ENCODE measurements at regions of chr2 and their contacts with region 1.

Region 1: DNA sequence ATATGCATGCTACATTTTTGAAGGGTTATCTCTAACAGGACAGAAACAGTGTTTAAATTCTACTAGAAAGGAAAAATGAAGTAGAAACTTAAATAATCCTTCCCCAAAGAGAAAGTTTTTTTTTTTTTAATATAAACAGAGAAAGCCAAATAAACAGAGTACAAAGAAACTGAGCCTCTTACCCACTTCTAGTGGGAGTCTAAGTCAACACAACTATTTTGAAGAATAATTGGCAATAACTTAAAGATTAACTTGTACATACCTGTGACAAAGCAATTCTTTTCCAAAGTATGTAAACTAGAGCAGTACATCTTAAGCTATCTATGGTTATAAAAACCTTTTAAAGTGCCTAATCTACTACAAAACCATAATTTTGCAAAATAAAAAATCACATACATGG is 224.7 kb downstream of the KCNH7 start:
- DNase-seq: no peak
- ATAC-seq: no peak
- H3K4me3 ChIP-seq: no peak overlapping the region
- H3K4me3 Mint-ChIP-seq: no peak overlapping the region
- H3K27ac ChIP-seq: no peak overlapping the region
- H3K27ac Mint-ChIP-seq: no peak overlapping the region
- H3K4me1 ChIP-seq: no peaks in the 10 kb centered on the region
- H3K4me1 Mint-ChIP-seq: no peaks in the 10 kb centered on the region
- H3K27me3 ChIP-seq: no peaks in the 10 kb centered on the region
- H3K27me3 Mint-ChIP-seq: no peaks in the 10 kb centered on the region
- CTCF ChIP-seq: no peak

Region 2: DNA sequence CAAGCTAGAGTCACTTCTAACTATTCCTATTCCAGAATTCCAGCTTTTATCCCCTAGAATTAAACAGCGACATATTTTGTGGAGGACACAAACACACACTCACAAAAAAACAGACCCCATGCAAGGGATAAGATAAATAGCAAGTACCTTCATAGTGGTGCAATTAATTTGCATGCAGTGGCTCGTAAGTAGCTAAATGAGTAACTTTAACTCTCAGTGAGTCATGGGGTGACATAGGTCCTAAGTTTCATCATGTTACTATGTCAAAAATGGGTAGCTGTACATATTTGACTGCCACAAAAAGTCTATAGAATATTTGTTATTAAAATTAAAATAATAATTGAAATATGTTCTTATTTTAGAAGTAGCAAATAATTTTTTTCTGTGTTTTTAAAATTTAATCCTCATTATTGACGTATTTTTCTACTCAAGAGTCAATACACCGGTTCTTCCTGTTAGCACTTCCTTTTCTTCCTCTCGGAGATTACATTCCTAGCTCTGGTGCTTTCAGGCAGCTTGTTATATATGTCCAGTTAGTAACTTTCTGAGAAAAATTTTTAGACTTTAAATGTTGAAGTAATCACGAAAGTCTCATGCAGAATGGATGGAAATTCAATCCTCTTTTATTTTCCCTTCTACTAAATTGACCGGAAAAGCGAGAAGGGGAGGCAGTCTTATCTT is 22.3 kb before region 1 on chr2:
- CTCF ChIA-PET with region 1: no interaction called
- POLR2A ChIA-PET with region 1: no interaction called
- intact Hi-C with region 1: loop called in 1 of 2 experiments (anchors 2 kb)
- DNase-seq: no peak
- ATAC-seq: no peak
- H3K4me3 ChIP-seq: no peak overlapping the region
- H3K4me3 Mint-ChIP-seq: no peak overlapping the region
- H3K27ac ChIP-seq: no peak overlapping the region
- H3K27ac Mint-ChIP-seq: no peak overlapping the region
- H3K4me1 ChIP-seq: no peaks in the 10 kb centered on the region
- H3K4me1 Mint-ChIP-seq: no peaks in the 10 kb centered on the region
- H3K27me3 ChIP-seq: no peaks in the 10 kb centered on the region
- H3K27me3 Mint-ChIP-seq: no peaks in the 10 kb centered on the region
- CTCF ChIP-seq: no peak

Region 3: DNA sequence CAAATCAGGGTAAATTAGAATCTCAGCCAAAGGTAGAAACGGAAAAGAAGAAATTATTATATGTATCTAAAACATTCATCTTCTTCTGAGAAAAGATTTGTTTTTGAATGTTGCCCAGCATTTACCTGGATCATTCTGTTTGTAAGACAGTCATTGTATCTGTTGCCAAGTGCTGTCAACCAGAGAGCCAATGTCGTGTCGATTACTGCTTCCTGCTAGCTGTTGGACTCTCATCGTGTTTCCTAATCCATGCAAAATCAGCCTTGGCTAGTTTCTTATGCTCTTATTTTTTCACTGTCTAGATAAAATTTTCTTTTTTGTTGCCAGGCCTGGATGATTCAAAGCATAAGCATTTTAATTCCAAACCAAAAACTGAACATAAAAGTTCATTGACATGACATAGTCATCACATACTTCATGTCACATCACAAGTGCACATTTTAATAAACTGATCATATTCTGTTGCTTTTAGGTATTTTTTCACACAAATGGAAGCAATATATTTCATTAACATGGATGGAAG is 22.4 kb after region 1 on chr2:
- CTCF ChIA-PET with region 1: no interaction called
- POLR2A ChIA-PET with region 1: no interaction called
- intact Hi-C with region 1: no loop called
- DNase-seq: no peak
- ATAC-seq: no peak
- H3K4me3 ChIP-seq: no peak overlapping the region
- H3K4me3 Mint-ChIP-seq: no peak overlapping the region
- H3K27ac ChIP-seq: no peak overlapping the region
- H3K27ac Mint-ChIP-seq: no peak overlapping the region
- H3K4me1 ChIP-seq: no peaks in the 10 kb centered on the region
- H3K4me1 Mint-ChIP-seq: no peaks in the 10 kb centered on the region
- H3K27me3 ChIP-seq: no peaks in the 10 kb centered on the region
- H3K27me3 Mint-ChIP-seq: no peaks in the 10 kb centered on the region
- CTCF ChIP-seq: no peak

Region 4: DNA sequence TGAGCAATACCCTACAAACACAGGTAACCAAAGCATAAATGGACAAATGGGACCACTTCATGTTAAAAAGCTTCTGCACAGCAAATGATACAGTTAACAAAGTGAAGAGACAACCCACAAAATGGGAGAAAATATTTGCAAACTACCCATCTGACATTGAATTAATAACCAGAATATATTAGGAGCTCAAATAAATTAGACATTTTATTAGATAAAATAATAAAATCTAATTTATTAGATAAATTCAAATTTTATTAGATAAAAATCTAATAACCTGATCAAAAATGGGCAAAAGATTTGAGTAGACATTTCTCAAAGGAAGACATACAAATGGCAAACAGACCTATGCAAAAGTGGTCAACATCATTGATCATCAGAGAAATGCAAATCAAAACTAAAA is 260.6 kb after region 1 on chr2:
- CTCF ChIA-PET with region 1: no interaction called
- POLR2A ChIA-PET with region 1: no interaction called
- intact Hi-C with region 1: no loop called
- DNase-seq: no peak
- ATAC-seq: no peak
- H3K4me3 ChIP-seq: no peak overlapping the region
- H3K4me3 Mint-ChIP-seq: no peak overlapping the region
- H3K27ac ChIP-seq: no peak overlapping the region
- H3K27ac Mint-ChIP-seq: no peak overlapping the region
- H3K4me1 ChIP-seq: no peaks in the 10 kb centered on the region
- H3K4me1 Mint-ChIP-seq: no peaks in the 10 kb centered on the region
- H3K27me3 ChIP-seq: no peaks in the 10 kb centered on the region
- H3K27me3 Mint-ChIP-seq: no peaks in the 10 kb centered on the region
- CTCF ChIP-seq: no peak